Activated T-helper 1 cell treated with anti-CD3 and anti-CD28 coated beads, Interleukin-12 subunit alpha, Interleukin-12 subunit beta, Interleukin-2, Interleukin-4 antibody, amounts not matched to agents 30 ng/mL and 10 ng/mL and 1 ng/mL, durations not matched to agents 14 hours and 24 hours and 36 hours (primary cell): ENCODE measurements at regions of chr12 and their contacts with region 1.

Region 1: DNA sequence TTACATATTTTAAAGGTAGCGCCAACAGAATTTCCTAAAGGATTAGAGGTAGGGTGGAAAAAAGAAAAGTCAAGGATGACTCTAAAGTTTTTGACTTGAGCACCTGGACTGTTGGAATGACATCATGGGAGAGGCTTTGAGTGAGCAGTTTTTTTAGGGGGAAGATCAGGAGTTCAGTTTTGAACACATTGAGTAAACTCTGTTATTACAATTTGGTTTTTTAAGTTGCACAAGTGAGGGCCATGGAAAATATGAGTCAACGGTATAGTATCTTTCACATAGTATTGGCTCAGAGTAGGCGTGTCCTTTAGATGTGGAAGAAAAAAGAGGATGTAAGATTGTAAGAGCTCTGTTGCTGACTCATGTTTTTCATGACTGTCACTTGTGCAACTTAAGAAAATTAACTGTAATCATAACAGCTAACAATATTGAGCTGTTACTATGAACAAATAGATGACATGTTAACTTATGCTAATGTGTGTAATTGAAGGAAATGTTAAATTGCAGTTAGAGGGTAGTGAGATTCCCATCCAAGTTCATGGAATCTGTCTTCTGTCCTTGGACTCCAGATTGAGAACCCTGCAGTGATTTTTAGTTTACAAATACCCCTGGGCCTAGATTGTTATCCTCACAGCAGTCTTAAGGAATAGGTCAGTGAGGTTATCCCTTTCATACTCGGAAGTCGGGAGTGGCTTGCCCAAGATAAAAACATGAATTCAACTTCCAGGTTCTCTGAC is 48.1 kb upstream of the ATP2B1 start:
- DNase-seq: peak; percentile 35
- H3K4me3 Mint-ChIP-seq: peak overlapping the region; percentile 3
- H3K27ac Mint-ChIP-seq: peak overlapping the region; percentile 81
- H3K4me1 Mint-ChIP-seq: peaks cover 29% of the 10 kb centered on the region
- H3K27me3 Mint-ChIP-seq: no peaks in the 10 kb centered on the region

Region 2: DNA sequence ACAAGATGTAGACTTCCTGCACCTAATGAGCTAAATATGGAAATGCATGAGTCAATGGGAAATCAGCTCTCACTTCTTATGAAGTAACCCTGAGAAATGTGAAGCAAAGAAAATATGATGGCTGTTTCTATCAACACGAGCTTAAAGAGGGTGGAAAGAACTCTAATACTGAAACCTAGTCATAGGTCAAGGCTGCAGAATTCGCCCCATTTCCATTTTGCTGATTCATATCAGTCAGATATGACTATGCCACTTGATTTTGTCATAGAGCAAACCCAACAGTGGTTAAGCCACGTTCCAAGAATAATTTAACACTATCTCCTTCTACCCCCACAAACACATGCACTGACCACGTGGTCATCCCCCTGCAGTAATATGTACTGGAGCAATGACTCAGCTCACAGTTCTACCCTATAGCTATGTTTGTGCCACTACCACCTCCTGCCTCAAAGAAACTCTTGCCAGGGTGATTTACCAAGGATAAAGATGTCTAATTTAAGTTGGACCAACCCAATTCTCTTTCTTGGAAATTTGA is 1457.1 kb before region 1 on chr12:
- intact Hi-C with region 1: loop called (anchors 2 kb)
- DNase-seq: peak; percentile 29
- H3K4me3 Mint-ChIP-seq: no peak overlapping the region
- H3K27ac Mint-ChIP-seq: peak overlapping the region; percentile 76
- H3K4me1 Mint-ChIP-seq: peaks cover 35% of the 10 kb centered on the region
- H3K27me3 Mint-ChIP-seq: no peaks in the 10 kb centered on the region

Region 3: DNA sequence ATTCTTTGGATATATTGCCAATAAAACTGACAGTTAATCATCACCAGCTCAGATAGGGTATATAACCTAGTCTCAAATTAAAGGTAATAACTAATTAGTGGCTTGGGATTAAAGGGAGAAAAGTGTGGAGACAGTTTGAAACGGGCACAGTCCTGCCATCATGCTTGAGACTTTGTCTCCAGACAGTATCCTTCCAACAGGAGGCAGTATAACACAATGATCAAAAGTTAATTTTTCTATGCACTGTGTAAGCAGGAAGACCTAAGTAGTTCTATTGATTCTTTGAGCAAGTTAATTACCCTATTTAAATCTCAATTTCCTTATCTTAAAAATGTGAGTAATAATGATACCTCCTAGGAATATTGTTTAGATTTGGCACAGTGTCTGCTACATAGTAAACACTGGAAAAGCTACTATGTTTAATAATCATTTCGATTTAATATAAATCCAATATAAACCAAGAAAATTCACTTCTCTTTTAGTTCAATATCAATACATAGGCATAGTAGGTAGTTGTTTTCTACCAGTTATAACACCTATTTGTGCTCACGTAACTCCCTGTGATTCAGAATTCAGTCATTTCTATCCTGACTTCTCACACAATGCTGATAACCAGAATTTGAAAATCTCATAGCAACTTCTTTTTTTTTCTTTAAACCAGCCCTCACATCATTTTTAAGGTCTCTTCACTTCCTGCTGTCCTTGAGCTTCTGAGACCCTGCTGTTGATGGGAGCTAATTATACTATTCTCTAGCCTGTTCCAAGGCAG is 285.8 kb before region 1 on chr12:
- intact Hi-C with region 1: loop called (anchors 1 kb)
- DNase-seq: no peak
- H3K4me3 Mint-ChIP-seq: no peak overlapping the region
- H3K27ac Mint-ChIP-seq: peak overlapping the region; percentile 22
- H3K4me1 Mint-ChIP-seq: peaks cover 76% of the 10 kb centered on the region
- H3K27me3 Mint-ChIP-seq: no peaks in the 10 kb centered on the region

Region 4: GRCh38 chr12:89597770-89598169 is 159.0 kb before region 1 on chr12:
- intact Hi-C with region 1: loop called (anchors 2 kb)
- DNase-seq: no peak
- H3K4me3 Mint-ChIP-seq: no peak overlapping the region
- H3K27ac Mint-ChIP-seq: peak overlapping the region; percentile 88
- H3K4me1 Mint-ChIP-seq: peaks cover 19% of the 10 kb centered on the region
- H3K27me3 Mint-ChIP-seq: peaks cover 6% of the 10 kb centered on the region

Region 5: DNA sequence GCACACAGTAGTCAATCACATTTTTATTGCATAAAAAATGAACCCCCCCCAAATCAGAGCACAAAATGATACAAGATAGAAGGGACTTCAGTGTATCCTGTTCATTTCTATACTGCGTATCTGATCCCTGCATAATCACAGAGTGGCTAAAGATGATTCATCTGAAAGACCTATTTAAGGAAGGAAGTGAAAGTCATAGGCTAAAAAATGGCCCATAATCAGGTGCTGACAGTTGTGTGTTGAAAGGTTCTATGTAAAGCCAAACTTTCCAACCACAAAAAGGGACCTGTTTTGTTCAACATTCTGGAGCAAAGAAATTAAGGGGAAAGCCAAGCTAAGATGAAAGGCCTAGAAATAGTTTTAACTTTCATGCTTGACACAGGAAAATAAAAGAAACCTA is 99.7 kb after region 1 on chr12:
- intact Hi-C with region 1: loop called (anchors 1 kb)
- DNase-seq: no peak
- H3K4me3 Mint-ChIP-seq: peak overlapping the region; percentile 25
- H3K27ac Mint-ChIP-seq: peak overlapping the region; percentile 62
- H3K4me1 Mint-ChIP-seq: peaks cover 40% of the 10 kb centered on the region
- H3K27me3 Mint-ChIP-seq: no peaks in the 10 kb centered on the region

Region 6: GRCh38 chr12:89882050-89882449 is 125.3 kb after region 1 on chr12:
- intact Hi-C with region 1: loop called (anchors 1 kb)
- DNase-seq: no peak
- H3K4me3 Mint-ChIP-seq: no peak overlapping the region
- H3K27ac Mint-ChIP-seq: no peak overlapping the region
- H3K4me1 Mint-ChIP-seq: peaks cover 23% of the 10 kb centered on the region
- H3K27me3 Mint-ChIP-seq: peaks cover 2% of the 10 kb centered on the region

Region 7: GRCh38 chr12:89960011-89960507 is 203.3 kb after region 1 on chr12:
- intact Hi-C with region 1: loop called (anchors 1 kb)
- DNase-seq: peak; percentile 18
- H3K4me3 Mint-ChIP-seq: no peak overlapping the region
- H3K27ac Mint-ChIP-seq: no peak overlapping the region
- H3K4me1 Mint-ChIP-seq: peaks cover 20% of the 10 kb centered on the region
- H3K27me3 Mint-ChIP-seq: peaks cover 17% of the 10 kb centered on the region